Activated CD4-positive, alpha-beta T cell treated with anti-CD3 and anti-CD28 coated beads for 36 hours (primary cell): ENCODE measurements at regions of chr16 and their contacts with region 1.

Region 1: GRCh38 chr16:3234543-3235541 is at the start of gene ZNF200:
- DNase-seq: peak; percentile 98
- ATAC-seq: peak; percentile 94
- H3K4me3 Mint-ChIP-seq: peak within 1 kb of the TSS; percentile 89
- H3K27ac Mint-ChIP-seq: peak within 1 kb of the TSS; percentile 96
- H3K4me1 Mint-ChIP-seq: peaks cover 30% of the 10 kb centered on the region
- H3K27me3 Mint-ChIP-seq: no peaks in the 10 kb centered on the region
- total RNA-seq, gene ZNF200: 8.3 to 9.0 TPM

Region 2: GRCh38 chr16:3094289-3095027 is 140.4 kb before region 1 on chr16:
- CTCF ChIA-PET with region 1: no interaction called
- POLR2A ChIA-PET with region 1: no interaction called
- intact Hi-C with region 1: no loop called
- DNase-seq: peak; percentile 77
- ATAC-seq: peak; percentile 53
- H3K4me3 Mint-ChIP-seq: no peak overlapping the region
- H3K27ac Mint-ChIP-seq: peak overlapping the region; percentile 29
- H3K4me1 Mint-ChIP-seq: peaks cover 32% of the 10 kb centered on the region
- H3K27me3 Mint-ChIP-seq: no peaks in the 10 kb centered on the region

Region 3: GRCh38 chr16:3112058-3112880 is 122.6 kb before region 1 on chr16 and contains the start of gene ZNF205:
- CTCF ChIA-PET with region 1: no interaction called
- POLR2A ChIA-PET with region 1: no interaction called
- intact Hi-C with region 1: no loop called
- DNase-seq: no peak
- ATAC-seq: no peak
- H3K4me3 Mint-ChIP-seq: no peak within 1 kb of the TSS
- H3K27ac Mint-ChIP-seq: no peak within 1 kb of the TSS
- H3K4me1 Mint-ChIP-seq: peaks cover 2% of the 10 kb centered on the region
- H3K27me3 Mint-ChIP-seq: peaks cover 5% of the 10 kb centered on the region
- total RNA-seq, gene ZNF205: 0.21 to 0.32 TPM

Region 4: DNA sequence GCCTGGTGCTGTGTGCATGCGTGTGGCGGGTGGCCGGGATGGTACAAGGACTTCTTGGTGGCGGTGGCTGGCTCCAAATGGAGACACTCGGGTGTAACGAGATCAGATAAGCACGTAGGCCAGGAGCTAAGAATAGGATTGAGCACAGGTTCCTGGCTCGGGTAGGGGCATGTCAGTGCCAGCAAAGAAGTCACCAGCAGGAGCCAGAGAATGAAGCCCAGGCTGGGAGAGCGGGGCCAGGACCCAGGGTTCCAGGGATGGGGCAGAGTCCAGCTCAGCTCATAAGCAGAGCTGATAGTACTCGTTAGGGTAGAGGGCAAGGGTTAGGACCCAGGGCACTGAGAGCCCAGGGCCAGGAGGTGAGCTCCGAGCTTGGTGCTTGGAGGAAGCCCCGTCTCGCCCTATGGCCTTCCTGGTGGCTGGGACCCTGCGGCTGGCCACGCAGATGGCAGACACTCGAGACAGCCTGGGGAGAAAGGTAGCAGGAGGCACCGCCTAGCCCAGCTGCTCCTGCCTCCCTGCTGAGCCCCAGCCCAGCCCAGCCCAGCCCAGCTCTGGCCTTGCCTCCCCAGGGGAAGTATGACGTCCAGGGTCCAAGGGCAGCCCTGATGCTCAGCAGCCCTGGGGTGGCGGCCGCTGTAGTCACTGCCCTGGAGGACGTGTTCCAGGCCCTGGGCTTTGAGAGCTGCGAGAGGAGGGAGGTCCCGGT is 91.1 kb before region 1 on chr16:
- CTCF ChIA-PET with region 1: no interaction called
- POLR2A ChIA-PET with region 1: no interaction called
- intact Hi-C with region 1: no loop called
- DNase-seq: no peak
- ATAC-seq: no peak
- H3K4me3 Mint-ChIP-seq: no peak overlapping the region
- H3K27ac Mint-ChIP-seq: no peak overlapping the region
- H3K4me1 Mint-ChIP-seq: no peaks in the 10 kb centered on the region
- H3K27me3 Mint-ChIP-seq: no peaks in the 10 kb centered on the region

Region 5: GRCh38 chr16:3188925-3189825 is 45.7 kb before region 1 on chr16:
- CTCF ChIA-PET with region 1: interaction called, 3 read pairs
- POLR2A ChIA-PET with region 1: interaction called, 3 read pairs
- intact Hi-C with region 1: loop called in 1 of 2 experiments (anchors 2 kb)
- DNase-seq: peak; percentile 78
- ATAC-seq: peak; percentile 42
- H3K4me3 Mint-ChIP-seq: peak overlapping the region; percentile 69
- H3K27ac Mint-ChIP-seq: peak overlapping the region; percentile 72
- H3K4me1 Mint-ChIP-seq: peaks cover 46% of the 10 kb centered on the region
- H3K27me3 Mint-ChIP-seq: peaks cover 66% of the 10 kb centered on the region

Region 6: DNA sequence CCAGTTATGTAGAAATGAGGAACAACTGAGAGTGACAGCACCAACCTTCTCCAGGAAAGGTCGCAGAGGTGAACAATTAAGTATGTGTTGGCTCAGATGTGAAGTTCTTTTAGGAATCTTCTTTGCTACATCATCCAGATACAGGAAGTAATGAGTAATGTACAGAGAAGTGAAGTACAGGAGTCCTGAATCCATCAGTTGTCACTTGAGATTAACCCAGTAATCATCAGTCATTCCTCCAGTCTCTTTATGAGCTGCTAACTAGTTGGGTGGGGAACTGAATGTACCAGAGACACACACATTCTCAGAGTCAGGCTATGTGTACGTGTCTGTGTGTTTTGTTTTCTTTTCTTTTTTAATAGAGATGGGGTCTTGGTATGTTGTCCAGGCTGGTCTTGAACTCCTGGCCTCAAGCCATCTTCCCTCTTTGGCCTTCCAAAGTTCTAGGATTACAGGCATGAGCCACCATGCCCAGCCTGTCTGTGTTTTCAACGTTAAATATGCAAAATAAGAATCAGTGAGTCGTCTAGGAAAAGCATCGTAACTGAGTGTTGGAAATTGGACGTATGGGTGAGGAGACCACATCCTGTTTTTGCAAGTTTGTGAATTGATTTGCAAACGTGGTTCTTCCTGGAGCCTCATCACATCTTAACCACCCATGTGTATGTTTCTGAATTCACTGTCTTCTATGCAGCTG is 19.8 kb before region 1 on chr16:
- CTCF ChIA-PET with region 1: no interaction called
- POLR2A ChIA-PET with region 1: no interaction called
- intact Hi-C with region 1: loop called (anchors 1 to 2 kb)
- DNase-seq: peak; percentile 49
- ATAC-seq: peak; percentile 82
- H3K4me3 Mint-ChIP-seq: peak overlapping the region; percentile 4
- H3K27ac Mint-ChIP-seq: peak overlapping the region; percentile 94
- H3K4me1 Mint-ChIP-seq: peaks cover 32% of the 10 kb centered on the region
- H3K27me3 Mint-ChIP-seq: no peaks in the 10 kb centered on the region

Region 7: DNA sequence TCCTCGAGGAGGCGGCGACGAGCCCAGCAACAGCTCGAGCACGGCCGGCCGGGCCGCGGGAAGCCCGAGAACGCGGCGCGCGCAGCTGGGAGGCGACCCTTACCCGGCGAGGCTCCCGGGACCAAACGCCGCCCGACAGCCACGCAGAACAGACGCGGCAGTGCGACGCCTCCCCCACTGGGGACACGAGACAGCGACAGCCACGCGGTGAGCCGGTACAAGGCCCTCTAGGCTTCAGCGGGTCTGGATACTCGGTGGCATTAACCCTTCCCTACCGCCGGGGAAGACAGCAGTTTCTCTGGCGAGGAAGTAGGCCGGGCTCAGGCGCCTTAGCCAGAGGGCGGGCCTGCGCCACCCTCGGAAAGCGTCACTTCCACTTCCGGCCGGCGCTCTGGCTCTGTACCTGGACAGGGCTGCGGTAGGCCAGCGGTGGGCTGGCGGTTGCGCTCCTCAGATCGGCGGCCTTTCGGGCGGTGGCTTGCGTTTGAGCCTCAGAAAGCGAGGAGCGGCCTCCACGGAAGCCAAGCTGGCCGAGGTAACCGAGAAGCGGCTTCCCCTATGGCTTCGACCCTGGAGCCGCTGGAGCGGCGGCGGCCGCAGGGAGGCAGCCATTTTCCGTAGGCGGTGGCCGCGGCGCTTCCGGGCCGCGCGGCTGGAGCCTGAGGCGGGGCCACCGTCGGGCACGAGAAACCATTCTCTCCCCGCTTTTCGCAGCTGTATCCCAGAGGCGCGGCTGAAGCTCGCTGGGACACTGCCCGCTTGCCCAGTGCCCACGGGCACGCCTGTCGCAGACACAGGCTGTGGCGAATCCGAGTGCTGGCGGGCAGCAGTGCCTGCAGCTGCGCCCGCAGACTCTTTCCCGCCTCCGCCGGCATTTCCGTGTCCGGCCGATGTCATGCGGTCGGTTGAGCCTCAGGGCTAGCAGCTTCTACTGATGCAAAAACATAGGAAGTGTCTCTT is 70.5 kb after region 1 on chr16 and contains the starts of genes TIGD7 and ZNF75A:
- CTCF ChIA-PET with region 1: no interaction called
- POLR2A ChIA-PET with region 1: no interaction called
- intact Hi-C with region 1: loop called in 1 of 2 experiments (anchors 1 kb)
- DNase-seq: peak; percentile 90
- ATAC-seq: peak; percentile 99
- H3K4me3 Mint-ChIP-seq: peak within 1 kb of the TSS; percentile 75
- H3K27ac Mint-ChIP-seq: peak within 1 kb of the TSS; percentile 84
- H3K4me1 Mint-ChIP-seq: peaks cover 15% of the 10 kb centered on the region
- H3K27me3 Mint-ChIP-seq: no peaks in the 10 kb centered on the region
- total RNA-seq, gene TIGD7: 2.9 TPM
- total RNA-seq, gene ZNF75A: 23.2 to 27.4 TPM

Region 8: DNA sequence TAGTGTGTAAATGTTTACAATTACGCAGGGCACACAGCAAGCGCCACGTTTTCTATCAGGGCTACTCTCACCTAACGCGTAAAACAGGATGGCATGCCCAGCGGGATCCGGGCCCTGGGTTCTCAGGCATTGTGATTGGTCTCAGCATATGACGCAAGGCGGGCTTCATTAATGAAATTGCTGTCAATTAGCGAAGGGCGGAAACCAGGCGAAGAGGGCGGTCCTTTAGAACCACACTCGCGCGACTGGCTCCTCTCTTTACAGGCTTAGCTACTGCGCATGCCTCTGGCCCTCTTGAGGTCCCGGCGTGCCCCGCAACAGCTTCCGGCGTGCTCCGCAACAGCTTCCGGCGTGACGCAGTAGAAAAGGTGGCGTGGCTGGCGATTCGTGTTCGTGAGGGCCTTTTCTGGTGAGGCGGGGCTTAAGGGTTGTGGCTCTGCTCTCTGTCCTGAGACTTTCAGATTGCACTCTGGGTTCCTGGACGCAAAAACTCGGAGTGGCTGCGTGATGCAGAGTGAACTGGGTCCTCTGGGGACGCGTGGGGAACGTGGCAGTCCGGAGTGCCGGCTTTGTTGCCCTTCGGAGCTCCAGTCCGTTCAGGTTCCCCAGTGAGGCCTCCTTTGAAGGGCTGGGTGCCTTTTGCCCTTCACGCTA is 130.1 kb after region 1 on chr16:
- CTCF ChIA-PET with region 1: no interaction called
- POLR2A ChIA-PET with region 1: no interaction called
- intact Hi-C with region 1: loop called in 1 of 2 experiments (anchors 1 kb)
- DNase-seq: peak; percentile 94
- ATAC-seq: peak; percentile 98
- H3K4me3 Mint-ChIP-seq: peak overlapping the region; percentile 76
- H3K27ac Mint-ChIP-seq: peak overlapping the region; percentile 91
- H3K4me1 Mint-ChIP-seq: peaks cover 8% of the 10 kb centered on the region
- H3K27me3 Mint-ChIP-seq: peaks cover 6% of the 10 kb centered on the region

Region 9: DNA sequence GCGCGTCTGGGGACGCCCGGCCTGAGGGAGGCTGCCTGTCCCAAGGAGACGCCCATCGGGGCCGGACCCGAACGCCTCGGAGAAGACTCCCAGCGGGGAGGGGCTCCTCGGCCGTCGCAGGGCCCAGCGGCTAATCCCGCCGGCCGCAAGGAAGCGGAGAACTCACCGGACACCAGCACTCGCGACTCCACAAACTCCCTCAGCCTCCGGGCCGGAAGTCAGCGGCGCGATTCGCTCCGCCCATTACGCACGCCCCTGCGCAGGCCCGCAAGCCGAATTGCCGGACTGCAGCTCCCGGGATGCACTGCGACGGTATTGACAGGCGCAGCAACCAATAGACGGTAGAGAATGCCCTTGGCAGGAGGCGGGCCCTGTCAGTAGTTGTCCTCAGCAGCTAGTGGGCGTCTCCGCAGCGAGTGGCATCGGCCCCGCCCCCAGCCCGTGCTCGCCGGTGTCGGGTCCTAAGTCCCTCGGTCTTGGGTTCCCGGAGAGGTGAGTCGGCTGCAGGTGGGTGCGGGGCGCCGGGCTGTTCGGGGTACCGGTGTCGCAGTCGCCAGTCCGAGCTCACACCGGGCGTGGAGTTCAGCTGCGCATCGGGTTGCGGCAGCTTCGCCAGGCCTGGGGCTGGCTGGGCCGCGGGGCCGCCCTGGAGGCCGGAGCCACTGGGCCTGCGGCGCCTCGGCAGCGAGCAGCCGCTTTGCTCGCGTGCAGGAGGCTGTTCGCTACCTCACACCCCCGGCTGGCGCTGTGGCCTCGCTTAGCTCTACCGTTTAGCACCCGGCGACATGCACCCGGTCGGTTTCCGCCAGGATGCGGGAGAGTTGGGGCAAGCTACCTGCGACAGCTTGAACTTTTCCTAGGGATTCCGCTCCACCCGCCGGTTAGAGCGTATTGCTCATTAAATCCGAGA is 166.2 kb after region 1 on chr16 and contains the starts of genes ZNF174 and ZSCAN32:
- CTCF ChIA-PET with region 1: no interaction called
- POLR2A ChIA-PET with region 1: no interaction called
- intact Hi-C with region 1: loop called in 1 of 2 experiments (anchors 1 kb)
- DNase-seq: peak; percentile 99
- ATAC-seq: peak; percentile 99
- H3K4me3 Mint-ChIP-seq: peak within 1 kb of the TSS; percentile 91
- H3K27ac Mint-ChIP-seq: peak within 1 kb of the TSS; percentile 83
- H3K4me1 Mint-ChIP-seq: peaks cover 49% of the 10 kb centered on the region
- H3K27me3 Mint-ChIP-seq: no peaks in the 10 kb centered on the region
- total RNA-seq, gene ZNF174: 7.4 to 9.5 TPM
- total RNA-seq, gene ZSCAN32: 15.7 to 17.4 TPM